WTC11 (cell line): ENCODE measurements at regions of chr19 and their contacts with region 1.

Region 1: DNA sequence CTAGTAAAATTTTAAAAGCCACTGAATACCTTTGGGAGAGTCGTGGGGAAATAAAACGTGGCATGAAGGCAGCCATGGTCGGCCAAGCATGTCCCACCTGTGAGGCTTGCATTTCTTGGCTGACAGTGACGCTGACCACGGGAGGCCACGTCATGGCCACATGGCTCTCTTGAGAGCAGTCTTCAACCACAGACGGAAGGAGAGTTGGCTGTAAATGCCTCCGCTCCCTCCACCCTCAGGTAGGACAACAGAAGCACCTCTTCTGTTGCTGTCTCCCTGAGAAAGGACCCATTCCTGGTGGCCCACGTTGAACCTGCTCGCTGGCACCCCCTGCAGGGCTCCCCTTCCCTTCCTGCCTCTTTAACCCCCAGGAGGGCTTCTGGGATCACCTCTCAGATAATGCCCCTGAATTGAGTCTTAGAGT is 10.6 kb upstream of the LRRC25 start:
- DNase-seq: peak; percentile 74
- ATAC-seq: peak; percentile 47
- H3K4me3 Mint-ChIP-seq: no peak overlapping the region
- H3K27ac Mint-ChIP-seq: no peak overlapping the region
- H3K4me1 Mint-ChIP-seq: peaks cover 6% of the 10 kb centered on the region
- H3K27me3 Mint-ChIP-seq: peaks cover 10% of the 10 kb centered on the region
- CTCF ChIP-seq: peak; percentile 29; the same call in 1 of the 2 replicates

Region 2: DNA sequence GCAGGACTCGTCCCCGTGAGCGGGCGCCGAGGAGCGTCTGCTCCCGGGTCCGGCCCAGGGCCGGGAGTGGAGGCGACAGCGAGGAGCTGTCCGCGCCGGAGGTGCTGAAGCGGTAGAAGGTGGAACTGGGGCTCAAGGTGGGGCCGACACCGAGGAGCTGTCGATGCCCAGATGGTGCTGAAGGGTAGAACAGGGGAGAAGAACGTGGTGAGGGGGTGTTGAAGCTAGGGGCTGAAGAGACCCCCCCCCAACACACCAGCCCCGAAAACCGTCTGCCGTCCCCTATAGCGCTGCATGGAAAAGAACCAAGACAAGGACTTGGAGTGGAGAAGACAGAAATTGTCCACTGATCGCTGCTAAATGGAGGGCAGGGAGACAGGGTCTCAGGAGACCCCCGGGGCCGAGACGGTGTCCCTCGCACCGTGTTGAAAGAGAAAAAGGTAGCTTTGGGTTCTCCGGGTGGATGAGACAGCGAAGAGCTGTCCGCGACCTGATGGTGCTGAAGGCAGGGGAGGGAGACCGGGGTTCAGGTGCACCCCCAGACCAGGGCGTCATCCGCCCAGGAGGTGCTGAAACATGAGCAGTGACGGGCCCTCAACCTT is 174.7 kb before region 1 on chr19:
- CTCF ChIA-PET with region 1: interaction called, 12 read pairs
- POLR2A ChIA-PET with region 1: no interaction called
- DNase-seq: peak; percentile 93
- ATAC-seq: peak; percentile 79
- H3K4me3 Mint-ChIP-seq: peak overlapping the region; percentile 78
- H3K27ac Mint-ChIP-seq: no peak overlapping the region
- H3K4me1 Mint-ChIP-seq: peaks cover 31% of the 10 kb centered on the region
- H3K27me3 Mint-ChIP-seq: peaks cover 12% of the 10 kb centered on the region
- CTCF ChIP-seq: no peak

Region 3: GRCh38 chr19:18291590-18292461 is 116.2 kb before region 1 on chr19:
- CTCF ChIA-PET with region 1: interaction called, 11 read pairs
- POLR2A ChIA-PET with region 1: no interaction called
- DNase-seq: peak; percentile 73
- ATAC-seq: peak; percentile 14
- H3K4me3 Mint-ChIP-seq: peak overlapping the region; percentile 83
- H3K27ac Mint-ChIP-seq: peak overlapping the region; percentile 99
- H3K4me1 Mint-ChIP-seq: peaks cover 48% of the 10 kb centered on the region
- H3K27me3 Mint-ChIP-seq: peaks cover 3% of the 10 kb centered on the region; the same call in 1 of the 2 replicates
- CTCF ChIP-seq: no peak

Region 4: GRCh38 chr19:18322759-18323460 is 85.2 kb before region 1 on chr19 and contains the start of gene LSM4:
- CTCF ChIA-PET with region 1: interaction called, 30 read pairs
- POLR2A ChIA-PET with region 1: no interaction called
- DNase-seq: peak; percentile 100
- ATAC-seq: peak; percentile 93
- H3K4me3 Mint-ChIP-seq: peak within 1 kb of the TSS; percentile 86
- H3K27ac Mint-ChIP-seq: peak within 1 kb of the TSS; percentile 100
- H3K4me1 Mint-ChIP-seq: peaks cover 42% of the 10 kb centered on the region
- H3K27me3 Mint-ChIP-seq: no peaks in the 10 kb centered on the region; the same call in 1 of the 2 replicates
- CTCF ChIP-seq: no peak
- total RNA-seq, gene LSM4: 373 to 434 TPM (median 409 TPM) in 3 replicates

Region 5: DNA sequence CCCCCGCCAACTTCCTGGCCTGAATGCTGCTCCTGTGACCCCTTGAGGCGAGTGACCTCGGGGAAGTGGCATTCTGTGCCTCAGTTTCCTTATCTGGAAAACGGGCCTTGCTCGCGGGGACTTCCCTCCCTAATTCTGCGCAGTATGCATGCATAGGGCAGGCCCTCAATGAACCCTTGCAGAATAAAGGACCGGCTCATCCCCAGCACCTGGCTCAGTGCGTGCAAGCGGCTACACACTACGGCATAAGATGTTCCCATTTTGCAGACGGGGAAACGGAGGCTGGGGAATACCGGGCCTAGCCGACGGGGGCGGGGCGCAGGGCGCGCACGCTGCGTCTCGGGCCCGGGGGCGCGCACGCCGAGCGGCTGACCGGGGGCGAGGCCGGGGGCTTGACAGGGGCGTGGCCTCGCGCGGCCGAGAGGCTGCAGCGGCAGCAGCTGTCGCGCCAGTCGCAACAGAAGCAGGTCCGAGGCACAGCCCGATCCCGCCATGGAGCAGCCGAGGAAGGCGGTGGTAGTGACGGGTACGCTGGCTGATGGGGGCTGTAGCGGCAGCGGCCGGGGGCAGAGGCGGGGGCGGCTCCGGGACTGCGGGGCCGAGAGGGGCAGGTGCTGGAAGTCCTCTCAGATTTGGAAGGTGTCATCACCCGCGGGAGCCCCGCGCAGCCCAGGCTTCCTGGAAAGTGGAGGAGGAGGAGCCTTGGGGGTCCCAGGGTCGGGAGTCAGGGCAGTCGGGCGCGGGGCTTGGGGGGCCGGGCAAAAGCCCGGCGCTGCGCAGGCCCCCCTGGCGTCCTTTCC is 67.7 kb before region 1 on chr19 and contains the start of gene PGPEP1:
- CTCF ChIA-PET with region 1: interaction called, 24 read pairs
- POLR2A ChIA-PET with region 1: no interaction called
- DNase-seq: peak; percentile 81
- ATAC-seq: peak; percentile 44
- H3K4me3 Mint-ChIP-seq: peak within 1 kb of the TSS; percentile 79
- H3K27ac Mint-ChIP-seq: peak within 1 kb of the TSS; percentile 96; the same call in 1 of the 2 replicates
- H3K4me1 Mint-ChIP-seq: peaks cover 43% of the 10 kb centered on the region
- H3K27me3 Mint-ChIP-seq: no peaks in the 10 kb centered on the region
- CTCF ChIP-seq: no peak
- total RNA-seq, gene PGPEP1: 39.2 to 68.1 TPM (median 40.8 TPM) in 3 replicates

Region 6: GRCh38 chr19:18349524-18350128 is 58.4 kb before region 1 on chr19:
- CTCF ChIA-PET with region 1: interaction called, 24 read pairs
- POLR2A ChIA-PET with region 1: interaction called, 5 read pairs
- DNase-seq: peak; percentile 71
- ATAC-seq: 0 out of 2 replicates have a peak, but pooled peaks have one; percentile 40
- H3K4me3 Mint-ChIP-seq: no peak overlapping the region
- H3K27ac Mint-ChIP-seq: peak overlapping the region; percentile 19; the same call in 1 of the 2 replicates
- H3K4me1 Mint-ChIP-seq: peaks cover 27% of the 10 kb centered on the region
- H3K27me3 Mint-ChIP-seq: no peaks in the 10 kb centered on the region
- CTCF ChIP-seq: 0 out of 2 replicates have a peak, but pooled peaks have one; percentile 18

Region 7: DNA sequence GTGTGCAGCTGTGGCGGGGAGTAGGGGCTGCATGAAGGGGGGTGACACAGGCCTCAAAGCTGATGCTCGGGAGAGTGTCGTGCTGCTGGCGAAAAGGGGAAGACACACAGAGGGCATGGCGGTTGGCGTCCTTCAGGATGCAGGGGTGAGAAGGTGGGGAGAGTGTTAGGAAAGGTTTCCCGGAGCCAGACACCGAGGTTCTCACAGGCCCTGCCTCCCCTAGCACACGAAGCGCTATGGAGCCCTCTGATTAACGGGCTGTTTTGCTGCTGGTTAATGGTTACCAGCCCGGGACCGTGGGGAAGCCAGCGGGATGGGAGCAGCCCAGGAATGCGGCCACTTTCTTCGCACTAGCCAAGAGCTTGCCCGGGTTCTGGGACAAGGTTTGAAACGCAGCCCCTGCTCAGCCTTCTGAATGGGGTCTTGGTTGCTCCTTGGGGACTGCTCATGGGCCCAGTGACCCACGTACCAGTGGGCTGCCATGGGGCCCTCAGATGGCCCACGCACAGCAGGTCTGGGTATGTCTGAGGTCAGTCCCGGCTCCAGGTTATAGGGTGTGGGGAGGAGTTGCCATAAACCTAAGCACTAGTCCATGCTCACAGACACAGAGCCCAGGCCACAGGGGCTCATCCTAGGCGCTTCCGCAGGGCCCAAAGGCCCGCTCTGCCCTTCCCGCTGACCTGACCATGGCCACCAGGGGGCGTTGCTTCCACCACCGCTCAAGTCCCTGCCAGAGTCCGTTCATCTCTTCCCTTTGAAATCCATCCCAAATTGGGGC is 61.2 kb after region 1 on chr19:
- CTCF ChIA-PET with region 1: no interaction called
- POLR2A ChIA-PET with region 1: no interaction called
- DNase-seq: peak; percentile 87
- ATAC-seq: peak; percentile 74
- H3K4me3 Mint-ChIP-seq: no peak overlapping the region
- H3K27ac Mint-ChIP-seq: no peak overlapping the region
- H3K4me1 Mint-ChIP-seq: peaks cover 9% of the 10 kb centered on the region
- H3K27me3 Mint-ChIP-seq: no peaks in the 10 kb centered on the region
- CTCF ChIP-seq: peak; percentile 88

Region 8: DNA sequence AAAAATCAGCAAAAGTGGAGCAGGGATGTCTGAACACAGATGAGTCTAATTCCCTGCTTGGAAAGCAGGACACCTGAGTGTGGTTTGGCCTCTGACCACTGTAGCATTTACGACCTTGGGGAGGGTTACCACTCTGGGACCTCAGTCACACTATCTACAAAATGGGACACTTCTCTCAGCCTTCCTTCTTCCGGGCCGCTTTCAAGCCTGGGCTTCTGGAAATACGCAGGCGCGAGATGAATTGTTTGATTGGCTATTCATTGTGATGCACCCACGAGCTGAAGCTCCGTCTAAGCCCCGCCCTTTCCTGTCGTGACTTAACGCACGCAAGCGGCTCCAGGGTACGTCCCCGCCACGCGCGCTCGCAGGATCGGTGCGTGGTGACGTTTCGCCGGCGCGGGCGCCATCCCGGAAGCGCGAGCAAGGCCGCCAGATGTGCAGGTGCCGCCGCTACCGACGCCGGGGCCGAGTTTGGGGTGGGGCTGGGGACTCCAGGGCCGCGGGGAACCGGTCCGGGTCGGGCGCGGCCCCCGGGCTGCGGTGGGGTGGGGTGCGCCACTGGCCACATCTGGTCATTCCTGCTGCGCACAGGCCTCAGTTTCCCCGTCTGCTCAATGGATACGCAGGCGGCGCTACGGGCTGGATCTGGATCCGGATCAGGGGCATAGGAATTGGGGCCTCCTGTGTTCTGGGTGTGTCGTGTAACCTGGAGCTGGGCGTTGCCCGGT is 149.6 kb after region 1 on chr19 and contains the start of gene KXD1:
- CTCF ChIA-PET with region 1: no interaction called
- POLR2A ChIA-PET with region 1: no interaction called
- DNase-seq: peak; percentile 79
- ATAC-seq: peak; percentile 91
- H3K4me3 Mint-ChIP-seq: peak within 1 kb of the TSS; percentile 87
- H3K27ac Mint-ChIP-seq: peak within 1 kb of the TSS; percentile 73
- H3K4me1 Mint-ChIP-seq: peaks cover 8% of the 10 kb centered on the region
- H3K27me3 Mint-ChIP-seq: no peaks in the 10 kb centered on the region
- CTCF ChIP-seq: no peak
- total RNA-seq, gene KXD1: 136 to 155 TPM (median 154 TPM) in 3 replicates